ENCODE measurements at regions of chr10 and their contacts with region 1.

Region 1: DNA sequence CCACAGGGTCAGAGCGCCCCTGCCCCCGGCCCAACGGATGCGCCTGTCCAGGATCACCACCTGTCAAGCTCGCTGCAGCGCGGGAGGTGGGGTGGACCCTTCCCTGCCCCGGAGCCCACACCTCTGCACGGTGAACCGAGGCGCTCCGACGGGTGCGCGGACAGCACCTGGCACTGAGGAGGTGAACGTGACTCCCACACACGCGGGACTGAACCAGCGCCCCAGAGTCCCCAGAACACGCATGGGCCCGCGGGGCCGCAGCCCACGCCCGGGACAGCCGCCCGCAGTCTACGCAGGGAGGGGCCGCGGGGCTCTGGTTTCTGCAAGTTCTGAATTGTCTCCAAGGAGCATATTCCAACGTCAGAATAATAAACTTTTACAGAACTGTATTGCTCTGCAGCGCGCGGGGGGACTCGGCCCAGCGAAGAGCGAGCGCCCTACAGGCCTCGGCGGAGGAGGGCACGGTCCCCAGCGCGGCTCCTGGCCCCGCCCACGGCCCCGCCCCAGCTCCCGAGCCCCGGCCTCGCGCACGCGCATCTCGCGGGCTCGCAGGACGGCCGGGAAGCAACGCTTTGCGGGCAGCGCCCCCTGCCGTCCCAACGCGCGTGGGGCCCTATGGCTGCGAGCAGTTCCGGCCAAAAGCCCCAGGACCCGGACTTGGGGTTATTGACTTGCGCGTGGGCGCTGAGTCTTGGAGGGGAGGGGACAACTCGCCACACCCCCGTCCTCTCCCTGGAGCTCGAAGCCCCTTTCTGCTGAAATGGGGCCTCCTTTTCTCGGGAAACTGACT is 29.7 kb downstream of the OAT start:
- DNase-seq: peak; percentile 83
- H3K4me3 Mint-ChIP-seq: no peak overlapping the region
- H3K27ac Mint-ChIP-seq: no peak overlapping the region
- H3K4me1 Mint-ChIP-seq: no peaks in the 10 kb centered on the region
- H3K27me3 Mint-ChIP-seq: no peaks in the 10 kb centered on the region
- CTCF ChIP-seq: peak; percentile 92

Region 2: DNA sequence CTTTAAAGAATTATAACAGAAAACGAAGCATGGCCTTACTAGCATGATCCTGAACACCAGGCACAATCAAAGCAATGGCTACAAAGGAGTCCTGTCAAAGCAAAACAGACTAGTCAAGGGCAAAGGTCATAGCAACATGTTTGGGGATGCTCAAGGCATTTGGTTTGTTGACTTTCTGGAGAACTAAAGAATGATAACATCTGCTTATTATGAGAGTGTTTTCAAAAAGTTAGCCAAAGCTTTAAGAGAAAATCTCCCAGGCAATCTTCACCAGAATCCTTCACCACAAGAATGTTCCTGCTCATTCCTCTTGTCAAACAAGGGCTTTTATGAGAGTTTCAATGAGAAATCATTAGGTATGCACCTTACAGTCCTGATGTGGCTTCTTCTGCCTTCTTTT is 402.3 kb before region 1 on chr10:
- CTCF ChIA-PET with region 1: interaction called, 306 read pairs
- POLR2A ChIA-PET with region 1: interaction called, 3 read pairs
- intact Hi-C with region 1: no loop called
- DNase-seq: no peak
- H3K4me3 Mint-ChIP-seq: no peak overlapping the region
- H3K27ac Mint-ChIP-seq: no peak overlapping the region
- H3K4me1 Mint-ChIP-seq: peaks cover 6% of the 10 kb centered on the region
- H3K27me3 Mint-ChIP-seq: peaks cover 52% of the 10 kb centered on the region
- CTCF ChIP-seq: no peak

Region 3: GRCh38 chr10:124259139-124259825 is 129.7 kb before region 1 on chr10:
- CTCF ChIA-PET with region 1: interaction called, 4 read pairs
- POLR2A ChIA-PET with region 1: no interaction called
- intact Hi-C with region 1: loop called (anchors 1 kb)
- DNase-seq: peak; percentile 35
- H3K4me3 Mint-ChIP-seq: no peak overlapping the region
- H3K27ac Mint-ChIP-seq: no peak overlapping the region
- H3K4me1 Mint-ChIP-seq: no peaks in the 10 kb centered on the region
- H3K27me3 Mint-ChIP-seq: no peaks in the 10 kb centered on the region
- CTCF ChIP-seq: no peak

Region 4: DNA sequence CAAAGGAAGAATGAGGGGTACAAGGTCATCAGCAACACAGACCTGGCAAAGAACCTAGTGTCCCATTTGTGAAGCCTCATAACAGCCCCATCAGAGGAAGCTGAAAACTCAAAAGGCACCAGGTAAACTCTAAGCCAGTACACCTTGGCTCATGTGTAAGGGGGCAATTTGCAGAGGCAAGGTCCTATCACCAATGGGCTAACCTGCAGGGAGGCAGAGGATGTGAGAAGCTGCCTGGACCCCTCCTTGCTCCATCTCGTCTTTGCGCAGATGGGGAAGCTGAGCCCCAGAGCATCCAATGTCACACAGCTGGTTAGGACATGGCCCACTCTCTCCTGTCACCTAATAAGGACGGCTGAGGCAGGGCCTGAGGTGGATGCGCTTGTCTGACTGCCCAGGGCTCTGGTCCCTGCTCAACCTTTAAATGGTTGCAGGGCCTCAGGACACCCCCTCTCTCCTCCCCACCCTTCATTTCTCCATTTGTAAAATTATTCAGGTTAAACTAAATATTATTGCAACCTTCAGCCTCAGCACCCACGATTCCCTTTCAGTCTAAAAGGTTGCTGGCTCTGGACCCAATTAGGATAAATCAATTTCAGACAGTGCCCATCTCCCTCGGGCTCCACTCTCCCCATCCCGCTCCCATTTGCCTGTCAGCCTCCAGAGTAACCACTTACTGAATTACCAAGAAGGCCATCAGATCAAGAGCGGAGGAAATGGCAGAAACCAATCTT is 105.6 kb before region 1 on chr10:
- CTCF ChIA-PET with region 1: no interaction called
- POLR2A ChIA-PET with region 1: no interaction called
- intact Hi-C with region 1: no loop called
- DNase-seq: no peak
- H3K4me3 Mint-ChIP-seq: no peak overlapping the region
- H3K27ac Mint-ChIP-seq: no peak overlapping the region
- H3K4me1 Mint-ChIP-seq: no peaks in the 10 kb centered on the region
- H3K27me3 Mint-ChIP-seq: peaks cover 11% of the 10 kb centered on the region
- CTCF ChIP-seq: no peak

Region 5: DNA sequence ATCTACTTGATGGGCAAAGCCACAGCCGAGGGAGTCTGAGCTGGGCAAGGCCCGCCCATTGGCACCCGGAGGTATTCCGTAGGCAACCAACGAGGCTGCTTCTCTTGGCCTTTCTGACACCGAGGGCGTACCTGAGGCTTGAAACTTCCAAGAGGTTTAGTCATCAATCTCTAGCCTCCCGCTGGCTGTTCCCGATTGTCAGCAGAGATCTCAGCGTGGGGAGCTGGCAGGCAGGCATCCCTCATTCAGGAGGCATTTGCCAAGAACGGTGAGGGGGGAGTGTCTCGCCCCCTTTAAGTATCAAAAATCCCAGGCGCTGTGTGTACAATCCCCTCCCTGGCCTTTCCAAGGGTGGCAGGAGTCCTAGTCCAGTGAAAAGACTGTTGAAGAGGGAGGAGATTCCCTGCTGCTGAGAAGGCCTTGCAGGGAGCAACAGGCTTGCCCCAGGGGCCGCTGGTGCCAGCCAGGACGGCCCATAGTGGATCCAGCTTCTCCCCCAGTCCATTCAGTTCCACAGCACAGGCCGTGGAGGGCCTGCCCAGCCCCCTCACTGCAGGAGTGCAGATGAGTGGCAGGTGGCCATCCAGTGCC is 10.0 kb before region 1 on chr10:
- CTCF ChIA-PET with region 1: interaction called, 11 read pairs
- POLR2A ChIA-PET with region 1: interaction called, 3 read pairs
- intact Hi-C with region 1: no loop called
- DNase-seq: peak; percentile 94
- H3K4me3 Mint-ChIP-seq: no peak overlapping the region
- H3K27ac Mint-ChIP-seq: no peak overlapping the region
- H3K4me1 Mint-ChIP-seq: peaks cover 8% of the 10 kb centered on the region
- H3K27me3 Mint-ChIP-seq: no peaks in the 10 kb centered on the region
- CTCF ChIP-seq: no peak

Region 6: GRCh38 chr10:124436191-124436638 is 47.2 kb after region 1 on chr10:
- CTCF ChIA-PET with region 1: no interaction called
- POLR2A ChIA-PET with region 1: no interaction called
- intact Hi-C with region 1: no loop called
- DNase-seq: peak; percentile 87
- H3K4me3 Mint-ChIP-seq: no peak overlapping the region
- H3K27ac Mint-ChIP-seq: peak overlapping the region; percentile 19
- H3K4me1 Mint-ChIP-seq: peaks cover 9% of the 10 kb centered on the region
- H3K27me3 Mint-ChIP-seq: no peaks in the 10 kb centered on the region
- CTCF ChIP-seq: no peak

Measured in MCF 10A (cell line).